ENCODE measurements at regions of chr7 and their contacts with region 1.

Region 1: DNA sequence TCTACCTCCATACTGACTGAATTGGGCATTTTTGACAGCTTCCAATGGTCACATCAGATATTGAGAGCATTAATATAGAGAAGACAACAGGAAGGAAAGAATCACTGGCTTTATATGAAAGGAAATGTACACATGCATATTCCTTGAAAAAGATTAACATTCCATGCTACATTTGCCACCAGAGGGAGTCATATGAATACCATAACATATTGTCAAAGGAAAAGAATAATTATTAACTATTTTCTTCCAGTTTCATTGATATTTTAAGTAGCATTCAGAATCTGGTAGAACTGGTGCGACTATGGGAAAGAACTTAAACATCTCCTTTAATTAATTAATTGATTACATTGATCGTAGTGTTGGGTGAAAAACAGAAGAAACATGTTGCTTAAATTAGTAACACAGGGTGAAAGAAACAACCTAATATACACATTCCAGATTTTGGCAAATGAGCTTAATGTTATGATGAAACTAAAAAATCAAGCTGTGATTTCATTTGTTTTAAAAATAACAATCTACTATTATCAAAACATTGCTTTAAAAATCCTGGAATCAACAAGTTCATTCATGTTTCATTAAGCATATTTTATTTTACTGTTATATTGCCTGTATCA is 71.5 kb downstream of the GPR85 start:
- DNase-seq: peak in 1 of 2 donors; percentile 70
- H3K4me3 ChIP-seq: no peak overlapping the region
- H3K27ac ChIP-seq: no peak overlapping the region
- H3K4me1 ChIP-seq: no peaks in the 10 kb centered on the region
- H3K27me3 ChIP-seq: no peaks in the 10 kb centered on the region
- CTCF ChIP-seq: peak in 3 of 7 experiments; percentile 22 to 44 (median 43)
- EP300 ChIP-seq: no peak
- POLR2A ChIP-seq: no peak

Region 2: GRCh38 chr7:113331155-113331898 is 316.2 kb after region 1 on chr7:
- intact Hi-C with region 1: no loop called
- DNase-seq: no peak
- H3K4me3 ChIP-seq: no peak overlapping the region
- H3K27ac ChIP-seq: no peak overlapping the region
- H3K4me1 ChIP-seq: no peaks in the 10 kb centered on the region
- H3K27me3 ChIP-seq: no peaks in the 10 kb centered on the region
- CTCF ChIP-seq: no peak
- EP300 ChIP-seq: no peak
- POLR2A ChIP-seq: no peak

Region 3: GRCh38 chr7:113414401-113415035 is 399.4 kb after region 1 on chr7:
- intact Hi-C with region 1: loop called (anchors 10 kb)
- DNase-seq: no peak
- H3K4me3 ChIP-seq: no peak overlapping the region
- H3K27ac ChIP-seq: no peak overlapping the region
- H3K4me1 ChIP-seq: no peaks in the 10 kb centered on the region
- H3K27me3 ChIP-seq: no peaks in the 10 kb centered on the region
- CTCF ChIP-seq: no peak
- EP300 ChIP-seq: no peak
- POLR2A ChIP-seq: no peak

Measured in stomach (tissue), 19 donors.